Calu3 (cell line): ENCODE measurements at regions of chr11 and their contacts with region 1.

Region 1: GRCh38 chr11:3709977-3710376 is 38.8 kb upstream of the CHRNA10 start:
- DNase-seq: no peak
- H3K4me3 Mint-ChIP-seq: no peak overlapping the region
- H3K27ac Mint-ChIP-seq: no peak overlapping the region
- H3K4me1 Mint-ChIP-seq: no peaks in the 10 kb centered on the region
- H3K27me3 Mint-ChIP-seq: no peaks in the 10 kb centered on the region
- CTCF ChIP-seq: no peak

Region 2: DNA sequence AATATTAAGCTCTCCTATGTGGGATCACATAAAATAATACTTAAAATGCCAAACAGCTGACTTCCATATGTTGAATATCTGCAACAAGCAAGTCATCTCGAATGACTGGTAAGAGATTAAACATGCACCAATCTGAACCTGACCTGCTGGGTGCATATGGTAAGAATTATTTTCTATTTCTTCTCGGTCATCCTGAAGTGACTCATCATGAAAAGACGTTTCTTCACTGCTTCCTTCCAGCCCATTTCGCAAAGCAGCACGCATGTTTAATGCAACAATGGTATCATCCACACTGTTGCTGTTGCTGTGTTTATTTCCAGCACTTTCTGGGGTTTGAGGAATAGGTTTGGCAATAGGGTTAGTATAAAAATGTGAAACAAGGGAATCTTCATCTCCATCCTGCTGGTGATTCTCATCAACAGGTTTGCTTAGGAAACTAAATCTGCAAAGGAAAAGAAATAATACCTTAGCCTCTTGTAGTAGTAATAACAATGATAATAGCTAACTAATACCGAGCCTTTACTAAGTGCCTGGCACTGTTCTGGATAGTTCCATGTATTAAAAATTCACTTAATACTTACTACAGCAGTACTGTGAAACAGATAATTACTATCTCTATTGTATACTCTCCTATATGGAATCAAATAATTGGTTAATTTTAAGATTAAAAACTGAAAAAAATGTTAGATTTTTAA is 13.2 kb after region 1 on chr11:
- CTCF ChIA-PET with region 1: no interaction called
- intact Hi-C with region 1: loop called (anchors 1 kb)
- DNase-seq: no peak
- H3K4me3 Mint-ChIP-seq: no peak overlapping the region
- H3K27ac Mint-ChIP-seq: no peak overlapping the region
- H3K4me1 Mint-ChIP-seq: no peaks in the 10 kb centered on the region
- H3K27me3 Mint-ChIP-seq: no peaks in the 10 kb centered on the region
- CTCF ChIP-seq: no peak

Region 3: GRCh38 chr11:3995949-3996554 is 286.1 kb after region 1 on chr11:
- CTCF ChIA-PET with region 1: no interaction called
- intact Hi-C with region 1: no loop called
- DNase-seq: no peak
- H3K4me3 Mint-ChIP-seq: no peak overlapping the region
- H3K27ac Mint-ChIP-seq: no peak overlapping the region
- H3K4me1 Mint-ChIP-seq: no peaks in the 10 kb centered on the region
- H3K27me3 Mint-ChIP-seq: no peaks in the 10 kb centered on the region
- CTCF ChIP-seq: no peak